ENCODE measurements at regions of chr19 and their contacts with region 1.

Region 1: GRCh38 chr19:38769635-38770211 is 3.6 kb downstream of the LGALS7 start:
- DNase-seq: peak; percentile 99
- H3K4me3 ChIP-seq: peak overlapping the region; percentile 23 to 68 (median 39)
- H3K27ac ChIP-seq: peak overlapping the region; percentile 63 to 89 (median 83)
- H3K4me1 ChIP-seq: peaks cover 0 to 20% (median 12%) of the 10 kb centered on the region in 6 donors
- H3K27me3 ChIP-seq: no peaks in the 10 kb centered on the region
- CTCF ChIP-seq: peak; percentile 92 to 99 (median 98)
- POLR2A ChIP-seq: no peak

Region 2: DNA sequence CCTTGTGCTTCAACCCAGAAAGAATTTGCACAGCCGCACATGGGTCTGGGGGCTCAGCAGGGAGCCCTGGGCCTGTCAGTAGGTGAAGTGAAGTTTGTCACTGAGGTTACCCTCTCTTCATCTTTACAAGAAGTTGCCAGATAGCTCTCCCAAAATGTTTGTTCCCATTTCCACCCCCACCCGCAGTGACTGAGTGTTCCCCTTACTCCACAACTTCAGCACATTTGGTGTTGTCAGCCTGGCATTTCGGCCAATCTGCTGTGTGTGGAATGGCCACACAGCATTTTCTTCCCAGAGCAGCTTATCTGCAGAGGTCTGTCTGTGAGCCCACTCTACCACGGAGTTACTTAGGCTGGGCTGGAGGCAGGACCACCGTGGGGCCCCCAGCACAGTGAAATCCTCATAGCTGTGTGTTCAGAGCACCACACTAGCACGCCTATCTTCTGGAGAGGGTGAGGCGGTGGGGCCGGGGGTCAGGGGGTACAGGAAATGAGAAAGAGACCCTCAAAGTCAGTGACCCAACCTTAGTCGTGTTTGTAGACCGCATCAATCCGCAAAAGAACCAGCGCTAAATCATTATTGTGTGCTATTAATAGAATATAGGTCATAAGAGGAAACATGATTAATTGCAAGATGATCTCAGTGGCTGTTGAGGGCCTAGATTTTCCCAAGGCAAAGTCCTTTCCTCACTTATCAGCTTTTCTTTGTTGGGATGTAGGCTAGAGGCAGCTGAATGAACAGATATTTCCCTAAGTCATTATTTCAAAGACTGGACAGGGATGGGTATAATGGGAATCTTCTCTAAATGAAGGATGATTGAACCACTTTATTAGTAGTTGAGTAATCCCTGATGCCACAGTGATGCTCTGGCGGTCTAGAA is 746.7 kb before region 1 on chr19:
- intact Hi-C with region 1: no loop called
- DNase-seq: peak; percentile 33
- H3K4me3 ChIP-seq: no peak overlapping the region
- H3K27ac ChIP-seq: peak overlapping the region in 1 of 8 donors; percentile 43
- H3K4me1 ChIP-seq: peaks cover 0 to 78% (median 46%) of the 10 kb centered on the region in 6 donors
- H3K27me3 ChIP-seq: no peaks in the 10 kb centered on the region
- CTCF ChIP-seq: no peak
- POLR2A ChIP-seq: no peak

Region 3: GRCh38 chr19:38736413-38737280 is 33.1 kb before region 1 on chr19:
- intact Hi-C with region 1: loop called (anchors 2 kb)
- DNase-seq: peak; percentile 89
- H3K4me3 ChIP-seq: peak overlapping the region; percentile 26 to 75 (median 44)
- H3K27ac ChIP-seq: peak overlapping the region in 7 of 8 donors; percentile 70 to 86 (median 76)
- H3K4me1 ChIP-seq: peaks cover 21 to 65% (median 53%) of the 10 kb centered on the region in 6 donors
- H3K27me3 ChIP-seq: peaks cover 0 to 15% (median 0%) of the 10 kb centered on the region in 7 donors
- CTCF ChIP-seq: no peak
- POLR2A ChIP-seq: no peak

Region 4: GRCh38 chr19:38826893-38827707 is 57.4 kb after region 1 on chr19:
- intact Hi-C with region 1: loop called (anchors 10 kb)
- DNase-seq: no peak
- H3K4me3 ChIP-seq: peak overlapping the region in 1 of 8 donors; percentile 16
- H3K27ac ChIP-seq: peak overlapping the region in 6 of 8 donors; percentile 29 to 68 (median 54)
- H3K4me1 ChIP-seq: peaks cover 20 to 70% (median 53%) of the 10 kb centered on the region in 6 donors
- H3K27me3 ChIP-seq: no peaks in the 10 kb centered on the region
- CTCF ChIP-seq: no peak
- POLR2A ChIP-seq: no peak

Measured in spleen (tissue), 13 donors.